Activated CD4-positive, alpha-beta T cell treated with anti-CD3 and anti-CD28 coated beads for 36 hours (primary cell): ENCODE measurements at regions of chr14 and their contacts with region 1.

Region 1: GRCh38 chr14:49692811-49693734 is at the start of gene KLHDC1:
- DNase-seq: peak; percentile 86
- ATAC-seq: peak; percentile 63
- H3K4me3 Mint-ChIP-seq: peak within 1 kb of the TSS; percentile 72
- H3K27ac Mint-ChIP-seq: peak within 1 kb of the TSS; percentile 92
- H3K4me1 Mint-ChIP-seq: peaks cover 42% of the 10 kb centered on the region
- H3K27me3 Mint-ChIP-seq: no peaks in the 10 kb centered on the region
- total RNA-seq, gene KLHDC1: 0.81 to 1.3 TPM

Region 2: GRCh38 chr14:49585803-49586672 is 107.0 kb before region 1 on chr14 and contains the start of gene RPS29:
- CTCF ChIA-PET with region 1: no interaction called
- POLR2A ChIA-PET with region 1: no interaction called
- intact Hi-C with region 1: loop called in 1 of 2 experiments (anchors 1 kb)
- DNase-seq: peak; percentile 99
- ATAC-seq: peak; percentile 84
- H3K4me3 Mint-ChIP-seq: peak within 1 kb of the TSS; percentile 92
- H3K27ac Mint-ChIP-seq: peak within 1 kb of the TSS; percentile 96
- H3K4me1 Mint-ChIP-seq: peaks cover 40% of the 10 kb centered on the region
- H3K27me3 Mint-ChIP-seq: no peaks in the 10 kb centered on the region
- total RNA-seq, gene RPS29: 481 to 1,987 TPM

Region 3: GRCh38 chr14:49620182-49621113 is 72.6 kb before region 1 on chr14 and contains the starts of genes MGAT2 and RPL36AL:
- CTCF ChIA-PET with region 1: interaction called, 9 read pairs
- POLR2A ChIA-PET with region 1: interaction called, 10 read pairs
- intact Hi-C with region 1: no loop called
- DNase-seq: peak; percentile 97
- ATAC-seq: peak; percentile 90
- H3K4me3 Mint-ChIP-seq: peak within 1 kb of the TSS; percentile 93
- H3K27ac Mint-ChIP-seq: peak within 1 kb of the TSS; percentile 97
- H3K4me1 Mint-ChIP-seq: peaks cover 51% of the 10 kb centered on the region
- H3K27me3 Mint-ChIP-seq: no peaks in the 10 kb centered on the region
- total RNA-seq, gene MGAT2: 23.8 to 32.2 TPM
- total RNA-seq, gene RPL36AL: 272 to 309 TPM

Region 4: DNA sequence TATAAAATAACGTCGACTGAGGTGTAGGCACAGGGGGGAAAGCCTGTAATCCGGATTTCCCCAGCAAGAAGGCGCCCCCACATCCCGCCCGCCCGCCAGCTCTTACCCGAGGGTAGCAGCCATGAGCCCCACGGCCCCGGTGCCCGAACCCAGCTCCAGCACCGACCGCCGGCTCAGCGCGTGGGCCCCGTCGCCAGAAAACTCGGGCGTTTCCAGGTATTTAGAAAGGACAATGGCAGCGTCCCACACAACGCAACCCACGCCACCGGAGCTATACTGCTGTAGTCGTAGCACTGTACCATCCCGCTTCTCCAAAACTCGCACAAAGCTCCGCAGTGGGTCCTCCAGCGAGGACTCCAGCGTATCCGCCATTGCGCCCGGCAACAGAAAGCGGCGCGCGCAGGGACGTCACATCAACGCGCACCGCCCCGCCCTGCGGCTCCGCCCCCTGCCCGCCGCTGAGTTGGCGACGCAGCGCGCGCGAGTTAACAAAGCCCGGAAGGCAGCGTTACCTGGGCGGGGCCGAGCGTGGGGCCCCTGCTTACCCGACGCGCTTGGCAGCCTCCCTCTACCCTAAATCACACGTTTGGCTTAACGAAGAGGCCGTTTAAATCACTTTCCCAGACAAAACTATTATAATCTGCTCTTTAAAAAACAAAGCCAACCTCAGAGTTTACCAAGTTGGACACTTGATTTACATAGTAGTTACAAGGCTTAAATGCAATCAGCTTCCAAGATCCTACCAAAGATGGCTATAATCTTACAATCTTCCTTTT is 423.3 kb after region 1 on chr14 and contains the start of gene VCPKMT:
- CTCF ChIA-PET with region 1: no interaction called
- POLR2A ChIA-PET with region 1: no interaction called
- intact Hi-C with region 1: loop called in 1 of 2 experiments (anchors 5 kb)
- DNase-seq: peak; percentile 98
- ATAC-seq: peak; percentile 99
- H3K4me3 Mint-ChIP-seq: peak within 1 kb of the TSS; percentile 95
- H3K27ac Mint-ChIP-seq: peak within 1 kb of the TSS; percentile 97
- H3K4me1 Mint-ChIP-seq: peaks cover 25% of the 10 kb centered on the region
- H3K27me3 Mint-ChIP-seq: no peaks in the 10 kb centered on the region
- total RNA-seq, gene VCPKMT: 6.6 to 10.4 TPM

Region 5: GRCh38 chr14:50823051-50823761 is 1130.1 kb after region 1 on chr14:
- CTCF ChIA-PET with region 1: no interaction called
- POLR2A ChIA-PET with region 1: no interaction called
- intact Hi-C with region 1: loop called in 1 of 2 experiments (anchors 10 kb)
- DNase-seq: peak; percentile 57
- ATAC-seq: peak; percentile 31
- H3K4me3 Mint-ChIP-seq: peak overlapping the region; percentile 64
- H3K27ac Mint-ChIP-seq: peak overlapping the region; percentile 82
- H3K4me1 Mint-ChIP-seq: peaks cover 85% of the 10 kb centered on the region
- H3K27me3 Mint-ChIP-seq: no peaks in the 10 kb centered on the region